Astrocyte of the cerebellum (primary cell): ENCODE measurements at regions of chr17 and their contacts with region 1.

Region 1: DNA sequence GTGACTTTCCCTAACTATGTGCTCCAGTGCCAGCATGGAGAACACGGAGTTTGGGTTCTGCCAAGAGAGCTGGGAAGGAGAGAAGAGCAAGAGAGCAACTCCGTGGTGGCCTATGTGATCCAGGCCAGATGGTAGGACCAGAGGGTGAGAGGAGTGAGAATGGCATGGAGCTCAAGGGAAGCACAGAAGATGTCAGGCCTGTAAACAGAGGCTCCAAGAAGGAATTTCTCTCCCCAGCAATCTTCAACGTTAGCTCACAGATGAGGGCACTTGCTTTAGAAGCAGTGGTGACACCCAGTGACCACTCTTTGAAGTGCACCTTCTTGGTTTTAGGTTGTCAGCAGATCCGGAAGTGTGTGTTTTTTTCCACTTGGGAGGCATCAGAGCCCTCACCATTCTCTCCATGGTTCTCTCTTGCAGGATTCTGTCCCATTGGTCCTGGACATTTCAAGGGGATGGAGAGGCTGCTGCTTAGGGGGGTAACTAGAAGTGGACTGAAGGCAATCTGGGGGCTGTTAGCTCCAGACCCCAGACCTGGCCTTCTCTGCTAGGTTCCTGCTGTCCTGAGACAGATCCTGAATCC is 18.1 kb upstream of the TMEM98 start:
- DNase-seq: peak; percentile 72
- H3K4me3 ChIP-seq: no peak overlapping the region
- CTCF ChIP-seq: peak; percentile 88

Region 2: DNA sequence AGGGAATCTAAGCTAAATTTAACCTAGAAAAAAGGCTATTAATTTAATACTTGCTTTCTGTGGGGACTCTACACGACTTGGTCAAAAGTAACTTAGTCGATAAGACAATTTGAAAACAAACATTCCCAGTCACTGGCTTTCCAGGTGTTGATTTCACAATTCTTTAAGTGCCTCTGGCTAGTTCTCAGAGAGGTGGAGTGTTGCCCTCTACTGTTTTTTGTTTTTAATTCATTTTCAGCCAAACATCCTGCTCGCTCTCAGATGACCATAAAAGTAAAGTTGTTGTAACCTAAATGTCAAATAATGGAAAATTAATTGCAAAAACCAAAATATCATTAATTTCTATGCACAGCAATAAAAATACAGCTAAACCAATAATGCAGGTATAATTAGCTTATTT is 140.0 kb before region 1 on chr17:
- in situ Hi-C with region 1: loop called (anchors 10 kb)
- DNase-seq: no peak
- H3K4me3 ChIP-seq: no peak overlapping the region
- CTCF ChIP-seq: no peak

Region 3: GRCh38 chr17:32849879-32850278 is 60.0 kb before region 1 on chr17:
- in situ Hi-C with region 1: loop called (anchors 10 kb)
- DNase-seq: no peak
- H3K4me3 ChIP-seq: no peak overlapping the region
- CTCF ChIP-seq: no peak

Region 4: DNA sequence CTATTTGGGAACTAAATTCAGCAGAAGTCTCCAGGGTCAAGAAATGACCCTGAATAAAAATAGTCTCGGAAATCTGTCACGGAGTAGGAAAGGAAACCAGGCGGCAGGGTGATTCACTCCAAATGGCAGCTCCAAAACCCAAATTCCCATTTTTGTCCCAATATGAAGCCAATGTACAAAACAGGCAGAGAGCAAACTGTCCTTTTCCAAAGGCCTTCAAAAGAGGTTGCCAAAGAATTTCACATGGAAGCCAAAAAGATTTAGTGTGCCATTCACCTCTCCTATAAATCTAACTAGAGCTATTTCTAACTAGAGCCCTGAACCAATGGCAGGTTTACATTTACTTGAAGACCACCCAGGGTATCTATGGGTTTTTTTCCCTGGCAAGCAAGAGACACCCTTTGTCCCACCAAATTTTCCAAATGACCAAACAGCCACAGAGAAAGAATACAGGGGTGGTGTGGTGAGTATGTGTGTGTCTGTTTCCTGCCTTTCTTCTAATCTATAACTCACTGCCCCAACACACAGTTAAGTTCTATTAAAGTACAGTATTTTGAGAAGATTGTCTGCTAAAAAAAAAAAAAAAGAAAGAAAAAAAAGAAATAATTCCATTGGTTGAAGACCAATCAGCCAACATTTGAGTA is 39.7 kb before region 1 on chr17:
- in situ Hi-C with region 1: loop called (anchors 5 kb)
- DNase-seq: no peak
- H3K4me3 ChIP-seq: no peak overlapping the region
- CTCF ChIP-seq: no peak

Region 5: DNA sequence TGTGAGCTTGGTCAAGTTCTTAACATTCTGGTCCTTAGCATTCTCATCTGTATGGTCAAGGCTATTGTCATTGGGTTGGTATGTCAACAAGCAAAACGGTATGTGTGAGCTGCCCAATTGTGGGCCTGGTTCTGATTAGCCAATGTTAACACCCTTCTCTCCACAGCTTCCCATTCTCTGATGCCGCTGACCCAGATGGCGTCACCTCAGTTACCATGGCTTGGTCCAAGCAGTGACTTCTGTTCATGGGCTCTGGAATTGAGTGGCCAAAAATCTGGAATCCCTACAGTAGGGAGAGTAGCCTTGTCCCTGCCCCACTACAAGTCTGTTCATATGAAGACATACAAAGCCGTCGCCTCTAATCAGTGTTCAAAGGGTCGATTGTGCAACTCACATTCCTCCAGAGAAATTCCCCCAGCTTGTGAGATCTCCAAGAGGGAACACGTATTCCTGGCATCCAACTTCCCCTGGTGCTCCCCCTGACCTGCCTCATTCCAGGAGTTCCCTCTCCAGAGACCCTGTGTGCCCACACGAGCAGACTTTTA is 33.8 kb after region 1 on chr17:
- in situ Hi-C with region 1: no loop called
- DNase-seq: peak; percentile 11
- H3K4me3 ChIP-seq: no peak overlapping the region
- CTCF ChIP-seq: no peak